ENCODE measurements at regions of chr9 and their contacts with region 1.

Region 1: DNA sequence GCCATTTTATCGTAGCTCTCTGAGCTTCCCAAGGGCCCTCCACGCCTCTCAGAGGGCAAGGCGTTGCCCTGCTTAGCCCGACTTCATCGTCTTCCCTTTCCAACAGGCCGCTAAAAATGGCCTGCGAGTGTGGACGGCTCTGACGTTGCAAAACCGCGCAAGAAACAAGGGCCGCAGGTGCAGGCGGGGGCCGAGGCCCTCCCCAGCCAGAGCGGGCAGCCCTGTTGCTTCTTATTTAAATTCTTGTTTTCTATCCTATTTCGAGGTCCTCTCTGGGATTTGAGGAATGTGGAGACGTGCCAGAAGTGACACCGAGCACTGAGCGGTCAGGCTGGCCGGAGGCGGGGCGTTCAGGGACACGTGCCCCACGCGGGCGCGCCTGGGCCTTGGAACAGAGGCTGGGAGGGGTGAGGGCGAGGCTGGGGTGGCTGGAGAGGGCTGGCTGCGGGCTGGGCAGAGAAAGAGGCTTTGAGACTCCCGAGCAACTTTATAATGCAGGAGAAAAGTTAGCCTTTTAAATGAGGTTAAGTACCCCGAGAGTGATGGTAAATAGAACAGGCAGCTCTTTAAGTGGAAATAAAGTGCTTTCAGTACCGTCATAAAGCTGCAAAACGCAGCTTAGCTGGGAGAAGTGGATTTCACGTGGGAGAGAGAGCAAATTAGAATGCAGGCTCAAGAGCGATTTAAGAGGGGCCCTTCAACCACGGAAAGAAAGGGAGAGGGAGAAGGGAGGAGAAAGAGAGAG is 243.6 kb downstream of the AUH start:
- DNase-seq: peak; percentile 92 to 95
- ATAC-seq: peak; percentile 96
- H3K4me3 ChIP-seq: no peak overlapping the region
- H3K27ac ChIP-seq: peak overlapping the region; percentile 72 to 83
- H3K4me1 ChIP-seq: peaks cover 0 to 2% of the 10 kb centered on the region in 2 donors
- H3K27me3 ChIP-seq: no peaks in the 10 kb centered on the region

Region 2: GRCh38 chr9:90964101-90965020 is 153.8 kb before region 1 on chr9:
- intact Hi-C with region 1: loop called in 1 of 2 experiments (anchors 5 kb)
- DNase-seq: peak; percentile 65 to 83
- ATAC-seq: peak; percentile 77
- H3K4me3 ChIP-seq: peak overlapping the region; percentile 4 to 25
- H3K27ac ChIP-seq: peak overlapping the region; percentile 91 to 93
- H3K4me1 ChIP-seq: peaks cover 3 to 8% of the 10 kb centered on the region in 2 donors
- H3K27me3 ChIP-seq: no peaks in the 10 kb centered on the region

Region 3: GRCh38 chr9:91060503-91061343 is 57.4 kb before region 1 on chr9:
- intact Hi-C with region 1: no loop called
- DNase-seq: no peak
- ATAC-seq: peak; percentile 59
- H3K4me3 ChIP-seq: no peak overlapping the region
- H3K27ac ChIP-seq: no peak overlapping the region
- H3K4me1 ChIP-seq: no peaks in the 10 kb centered on the region
- H3K27me3 ChIP-seq: no peaks in the 10 kb centered on the region

Region 4: DNA sequence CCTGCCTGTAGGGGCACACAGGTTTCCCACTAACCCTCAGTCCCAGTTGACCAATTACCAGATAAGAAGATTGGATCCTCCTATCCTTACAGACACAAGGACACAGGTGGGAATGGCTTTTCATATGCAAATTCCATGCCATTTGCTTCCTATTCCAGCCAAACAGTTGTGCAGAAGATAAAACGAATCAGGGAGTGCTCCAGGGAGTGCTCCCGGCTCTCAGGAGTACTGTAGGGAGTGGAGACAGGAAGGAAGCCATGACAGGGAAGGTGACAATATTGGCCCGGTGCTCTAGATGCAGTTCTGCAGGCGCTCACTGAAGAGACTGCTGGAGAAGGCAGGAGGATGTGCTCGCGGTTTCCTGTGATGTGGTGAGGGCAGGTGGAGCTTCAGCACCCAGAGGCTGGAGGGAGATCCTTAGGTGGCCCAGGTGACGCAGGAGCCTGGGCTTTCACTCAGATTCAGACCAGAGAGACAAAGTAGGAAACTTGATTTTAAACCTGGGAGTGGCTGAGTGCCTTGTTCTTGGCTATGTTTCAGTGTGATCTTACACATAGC is 16.4 kb before region 1 on chr9:
- intact Hi-C with region 1: loop called in 1 of 2 experiments (anchors 2 kb)
- DNase-seq: no peak
- ATAC-seq: no peak
- H3K4me3 ChIP-seq: no peak overlapping the region
- H3K27ac ChIP-seq: peak overlapping the region in 1 of 2 donors; percentile 91
- H3K4me1 ChIP-seq: peaks cover 0 to 6% of the 10 kb centered on the region in 2 donors
- H3K27me3 ChIP-seq: no peaks in the 10 kb centered on the region

Region 5: DNA sequence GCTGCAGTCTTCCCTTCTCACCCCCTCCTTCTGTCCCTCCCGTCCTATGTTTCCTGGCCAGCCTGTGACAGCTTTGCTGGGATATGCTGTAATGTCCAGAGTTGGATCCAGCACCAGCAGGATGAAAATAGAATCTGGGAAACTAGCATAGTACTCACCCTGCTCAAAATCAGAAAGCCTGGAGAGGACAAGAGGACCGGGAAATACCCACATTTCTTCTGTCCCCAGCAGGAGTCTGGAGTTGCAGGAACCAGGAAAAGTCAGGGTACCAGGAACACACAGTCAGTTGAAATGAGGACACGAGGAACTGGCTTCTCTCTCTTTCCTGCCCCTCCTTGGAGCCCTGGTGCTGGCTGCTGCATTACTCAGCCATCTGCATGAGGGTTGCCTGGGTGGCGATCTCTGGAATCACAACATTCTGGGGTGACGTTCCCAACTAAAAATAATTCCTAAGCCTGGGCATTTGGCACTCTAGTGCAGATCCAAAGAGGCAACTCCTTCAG is 365.1 kb after region 1 on chr9:
- intact Hi-C with region 1: loop called in 1 of 2 experiments (anchors 5 kb)
- DNase-seq: peak in 1 of 2 donors; percentile 76
- ATAC-seq: peak; percentile 83
- H3K4me3 ChIP-seq: no peak overlapping the region
- H3K27ac ChIP-seq: peak overlapping the region; percentile 6 to 73
- H3K4me1 ChIP-seq: peaks cover 0 to 4% of the 10 kb centered on the region in 2 donors
- H3K27me3 ChIP-seq: no peaks in the 10 kb centered on the region

Measured in aorta (tissue), 5 donors.